HepG2 (cell line): ENCODE measurements at regions of chr3 and their contacts with region 1.

Region 1: DNA sequence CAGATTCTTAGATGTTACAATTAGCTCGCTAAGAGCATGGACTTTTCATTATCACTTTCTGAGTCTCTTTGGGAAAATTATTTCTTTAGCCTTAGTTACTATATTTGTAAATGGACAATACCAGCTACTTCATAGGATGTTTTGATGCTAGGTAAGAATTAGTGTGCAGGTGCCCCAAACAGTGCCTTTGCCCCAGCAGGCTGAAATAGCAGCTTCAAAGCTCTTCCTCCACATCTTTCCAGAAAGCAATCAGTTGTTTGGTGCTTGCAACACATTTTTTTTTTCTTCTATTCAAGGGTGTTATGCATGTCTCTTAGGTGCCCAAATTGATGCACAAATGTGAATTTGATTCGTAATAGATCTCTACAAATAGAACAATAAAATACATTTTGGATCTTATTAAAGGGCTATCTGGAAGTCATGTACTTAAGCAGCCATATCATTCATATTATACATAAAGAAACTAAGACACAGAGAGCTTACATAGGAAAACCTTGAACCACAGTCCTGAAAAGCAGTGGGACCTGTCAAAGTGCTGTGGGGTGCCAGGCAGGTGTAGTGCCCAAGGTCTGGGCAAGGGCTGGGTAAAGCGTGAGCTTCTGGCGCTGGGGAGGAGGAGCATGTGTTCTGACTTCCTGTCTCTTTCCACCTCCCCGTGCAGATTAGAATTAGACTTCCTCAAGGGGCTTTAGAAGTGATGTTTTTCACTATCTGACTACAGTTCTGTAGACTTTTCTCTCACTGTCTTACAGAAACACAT is 62.9 kb downstream of the FNDC3B start:
- DNase-seq: no peak
- ATAC-seq: peak; percentile 58
- H3K4me3 ChIP-seq: peak overlapping the region in 1 of 3 experiments; percentile 39; a peak in 2 of 6 replicates
- H3K27ac ChIP-seq: peak overlapping the region; percentile 84
- H3K4me1 ChIP-seq: peaks cover 100% of the 10 kb centered on the region
- H3K27me3 ChIP-seq: no peaks in the 10 kb centered on the region
- CTCF ChIP-seq: no peak
- EP300 ChIP-seq: no peak
- POLR2A ChIP-seq: peak; percentile 14 to 33; a peak in 2 of 4 replicates
- RAD21 ChIP-seq: no peak

Region 2: GRCh38 chr3:172061724-172062184 is 40.5 kb before region 1 on chr3:
- CTCF ChIA-PET with region 1: no interaction called
- POLR2A ChIA-PET with region 1: interaction called, 8 read pairs
- in situ Hi-C with region 1: no loop called
- intact Hi-C with region 1: loop called (anchors 2 kb)
- DNase-seq: peak; percentile 88
- ATAC-seq: peak; percentile 47
- H3K4me3 ChIP-seq: peak overlapping the region in 1 of 3 experiments; percentile 30; a peak in 2 of 6 replicates
- H3K27ac ChIP-seq: peak overlapping the region; percentile 70
- H3K4me1 ChIP-seq: peaks cover 100% of the 10 kb centered on the region
- H3K27me3 ChIP-seq: no peaks in the 10 kb centered on the region
- CTCF ChIP-seq: no peak
- EP300 ChIP-seq: peak in 1 of 2 experiments; percentile 95; a peak in 2 of 4 replicates
- POLR2A ChIP-seq: no peak
- RAD21 ChIP-seq: no peak

Region 3: GRCh38 chr3:172082269-172082668 is 20.0 kb before region 1 on chr3:
- CTCF ChIA-PET with region 1: no interaction called
- POLR2A ChIA-PET with region 1: interaction called, 10 read pairs
- in situ Hi-C with region 1: no loop called
- intact Hi-C with region 1: no loop called
- DNase-seq: peak; percentile 49
- ATAC-seq: peak; percentile 7; the same call in 1 of the 3 replicates
- H3K4me3 ChIP-seq: no peak overlapping the region; a peak in 1 of 6 replicates
- H3K27ac ChIP-seq: peak overlapping the region; percentile 66
- H3K4me1 ChIP-seq: peaks cover 100% of the 10 kb centered on the region
- H3K27me3 ChIP-seq: no peaks in the 10 kb centered on the region
- CTCF ChIP-seq: no peak
- EP300 ChIP-seq: no peak
- POLR2A ChIP-seq: no peak
- RAD21 ChIP-seq: no peak

Region 4: DNA sequence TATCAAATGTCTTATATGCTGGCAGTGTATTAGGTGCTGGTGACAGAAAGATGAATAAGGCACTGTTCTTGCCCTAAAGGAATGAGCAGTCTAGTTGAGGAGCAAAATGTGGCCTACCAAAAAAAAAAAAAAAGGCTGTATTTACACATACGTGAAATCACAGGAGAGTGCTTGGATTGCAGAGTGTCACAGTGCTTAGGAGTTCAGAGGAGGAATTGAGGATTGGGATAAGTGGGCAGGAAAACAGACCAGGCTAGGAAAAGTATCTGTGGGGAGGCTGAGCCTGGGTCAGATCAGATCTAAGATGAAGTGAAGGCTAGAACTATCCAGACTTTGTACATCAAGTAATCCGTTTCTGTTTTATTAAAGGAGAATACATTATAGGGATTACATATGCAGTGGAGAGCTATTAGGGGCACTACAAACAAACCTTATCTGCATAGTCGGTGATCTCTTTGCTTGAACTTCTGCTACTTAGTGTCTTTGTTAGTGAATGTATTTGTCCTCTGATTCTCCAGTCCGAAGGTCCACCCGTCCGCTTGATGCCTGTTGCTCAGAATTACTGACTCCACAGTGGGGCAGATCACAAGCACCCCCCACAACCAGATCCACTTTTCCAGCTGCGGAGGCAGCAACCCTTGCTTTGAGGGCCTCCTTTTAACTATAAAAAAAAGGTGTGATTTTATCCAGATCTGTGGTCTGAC is 17.1 kb after region 1 on chr3:
- CTCF ChIA-PET with region 1: no interaction called
- POLR2A ChIA-PET with region 1: interaction called, 6 read pairs
- in situ Hi-C with region 1: no loop called
- intact Hi-C with region 1: loop called (anchors 1 kb)
- DNase-seq: peak; percentile 87
- ATAC-seq: peak; percentile 73
- H3K4me3 ChIP-seq: no peak overlapping the region
- H3K27ac ChIP-seq: peak overlapping the region; percentile 85
- H3K4me1 ChIP-seq: peaks cover 100% of the 10 kb centered on the region
- H3K27me3 ChIP-seq: no peaks in the 10 kb centered on the region
- CTCF ChIP-seq: no peak
- EP300 ChIP-seq: peak in 1 of 2 experiments; percentile 59; a peak in 1 of 4 replicates
- POLR2A ChIP-seq: peak in 1 of 2 experiments; percentile 34; a peak in 1 of 4 replicates
- RAD21 ChIP-seq: no peak

Region 5: GRCh38 chr3:172138795-172139441 is 36.6 kb after region 1 on chr3:
- CTCF ChIA-PET with region 1: no interaction called
- POLR2A ChIA-PET with region 1: interaction called, 37 read pairs
- in situ Hi-C with region 1: no loop called
- intact Hi-C with region 1: loop called (anchors 1 kb)
- DNase-seq: peak; percentile 70
- ATAC-seq: no peak
- H3K4me3 ChIP-seq: no peak overlapping the region; a peak in 1 of 6 replicates
- H3K27ac ChIP-seq: peak overlapping the region; percentile 89
- H3K4me1 ChIP-seq: peaks cover 94% of the 10 kb centered on the region
- H3K27me3 ChIP-seq: no peaks in the 10 kb centered on the region
- CTCF ChIP-seq: no peak
- EP300 ChIP-seq: peak in 1 of 2 experiments; percentile 51; a peak in 2 of 4 replicates
- POLR2A ChIP-seq: peak; percentile 28 to 38; a peak in 2 of 4 replicates
- RAD21 ChIP-seq: no peak